ENCODE measurements at regions of chr10 and their contacts with region 1.

Region 1: DNA sequence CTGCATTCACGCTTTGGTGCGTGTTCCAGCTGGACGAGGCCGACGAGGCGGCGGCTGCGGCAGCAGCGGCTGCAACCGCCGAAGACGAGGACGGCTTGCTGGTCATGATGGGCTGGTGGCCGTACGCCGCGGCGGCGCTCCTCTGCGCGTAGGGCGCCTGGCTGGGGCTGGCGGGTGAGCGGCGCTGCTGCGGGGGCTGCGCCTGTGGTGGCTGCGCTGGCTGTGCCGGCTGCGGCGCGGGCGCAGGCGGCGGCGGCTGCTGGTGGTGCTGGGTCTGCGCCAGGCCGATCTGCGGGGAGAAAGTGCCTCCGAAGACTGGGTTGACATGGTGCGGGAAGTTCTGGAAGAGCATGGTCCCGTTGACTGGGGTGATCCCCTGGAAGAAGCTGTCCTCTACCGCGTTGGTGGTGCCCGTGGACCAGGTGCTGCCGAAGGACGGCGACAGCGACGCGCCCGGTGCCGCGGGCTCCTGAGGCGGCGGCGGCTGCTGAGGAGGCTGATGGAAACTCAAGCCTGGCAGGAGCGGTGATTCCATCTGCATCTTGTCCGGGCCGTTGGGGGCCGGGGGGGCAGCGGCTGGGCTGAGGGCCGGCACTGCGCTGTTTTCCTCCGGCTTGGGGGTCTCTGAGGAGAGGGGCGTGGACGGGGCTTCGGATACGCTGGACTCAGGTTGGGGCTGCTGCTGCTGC is 51.1 kb downstream of the CPEB3 start:
- DNase-seq: peak; percentile 46
- H3K4me3 ChIP-seq: peak overlapping the region; percentile 81
- H3K27ac ChIP-seq: peak overlapping the region; percentile 92
- H3K4me1 ChIP-seq: peaks cover 75% of the 10 kb centered on the region
- H3K27me3 ChIP-seq: no peaks in the 10 kb centered on the region
- CTCF ChIP-seq: no peak

Region 2: GRCh38 chr10:91444211-91445182 is 795.2 kb before region 1 on chr10:
- intact Hi-C with region 1: no loop called
- DNase-seq: no peak
- H3K4me3 ChIP-seq: no peak overlapping the region
- H3K27ac ChIP-seq: no peak overlapping the region
- H3K4me1 ChIP-seq: peaks cover 13% of the 10 kb centered on the region
- H3K27me3 ChIP-seq: no peaks in the 10 kb centered on the region
- CTCF ChIP-seq: no peak

Region 3: DNA sequence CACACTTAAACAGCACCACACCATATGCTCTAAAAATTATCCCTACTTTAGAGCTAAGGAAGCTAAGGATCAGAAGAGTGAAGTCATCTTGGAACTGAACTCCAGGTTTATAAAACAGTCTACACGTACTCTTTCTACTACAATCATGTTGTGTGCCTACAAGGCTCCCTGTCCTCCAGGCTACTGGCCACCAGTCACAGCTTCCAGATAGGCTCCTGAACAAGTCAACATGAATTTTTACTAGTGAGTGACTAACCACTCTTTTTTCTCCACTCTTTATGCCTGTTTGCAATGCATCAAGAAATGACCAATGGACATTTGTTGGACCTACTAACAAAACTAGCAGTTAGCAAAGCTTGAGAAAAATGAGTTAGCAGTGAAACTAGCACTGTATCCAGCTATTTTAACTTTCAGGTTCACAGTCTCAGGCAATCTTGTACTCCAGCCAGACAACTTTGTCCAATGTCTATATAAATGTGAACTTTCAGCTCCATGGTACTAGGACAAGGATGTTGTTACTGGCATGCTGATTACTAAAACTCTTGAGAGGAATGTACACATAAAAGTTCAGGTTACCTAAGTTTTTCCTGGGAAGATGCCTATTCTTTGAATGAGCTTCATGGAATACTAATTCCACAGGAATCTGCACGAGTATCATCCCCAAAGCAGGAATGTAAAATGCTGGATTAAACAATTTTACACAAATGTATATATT is 136.2 kb before region 1 on chr10:
- intact Hi-C with region 1: no loop called
- DNase-seq: no peak
- H3K4me3 ChIP-seq: no peak overlapping the region
- H3K27ac ChIP-seq: no peak overlapping the region
- H3K4me1 ChIP-seq: peaks cover 53% of the 10 kb centered on the region
- H3K27me3 ChIP-seq: no peaks in the 10 kb centered on the region
- CTCF ChIP-seq: no peak

Region 4: GRCh38 chr10:92290837-92291615 is 51.3 kb after region 1 on chr10 and contains the starts of genes CPEB3 and MARCHF5:
- intact Hi-C with region 1: loop called (anchors 5 kb)
- DNase-seq: peak; percentile 97
- H3K4me3 ChIP-seq: peak within 1 kb of the TSS; percentile 99
- H3K27ac ChIP-seq: peak within 1 kb of the TSS; percentile 97
- H3K4me1 ChIP-seq: peaks cover 49% of the 10 kb centered on the region
- H3K27me3 ChIP-seq: no peaks in the 10 kb centered on the region
- CTCF ChIP-seq: peak; percentile 79
- total RNA-seq, gene CPEB3: 13.6 TPM
- total RNA-seq, gene MARCHF5: 32.2 TPM

Region 5: GRCh38 chr10:92305133-92306072 is 65.7 kb after region 1 on chr10:
- intact Hi-C with region 1: no loop called
- DNase-seq: no peak
- H3K4me3 ChIP-seq: no peak overlapping the region
- H3K27ac ChIP-seq: no peak overlapping the region
- H3K4me1 ChIP-seq: peaks cover 53% of the 10 kb centered on the region
- H3K27me3 ChIP-seq: no peaks in the 10 kb centered on the region
- CTCF ChIP-seq: no peak

Region 6: GRCh38 chr10:92356041-92356440 is 116.3 kb after region 1 on chr10:
- intact Hi-C with region 1: no loop called
- DNase-seq: no peak
- H3K4me3 ChIP-seq: no peak overlapping the region
- H3K27ac ChIP-seq: no peak overlapping the region
- H3K4me1 ChIP-seq: no peaks in the 10 kb centered on the region
- H3K27me3 ChIP-seq: no peaks in the 10 kb centered on the region
- CTCF ChIP-seq: no peak

Measured in left ventricle myocardium inferior (tissue), 1 donor.